AG04450 (cell line): ENCODE measurements at regions of chr1 and their contacts with region 1.

Region 1: DNA sequence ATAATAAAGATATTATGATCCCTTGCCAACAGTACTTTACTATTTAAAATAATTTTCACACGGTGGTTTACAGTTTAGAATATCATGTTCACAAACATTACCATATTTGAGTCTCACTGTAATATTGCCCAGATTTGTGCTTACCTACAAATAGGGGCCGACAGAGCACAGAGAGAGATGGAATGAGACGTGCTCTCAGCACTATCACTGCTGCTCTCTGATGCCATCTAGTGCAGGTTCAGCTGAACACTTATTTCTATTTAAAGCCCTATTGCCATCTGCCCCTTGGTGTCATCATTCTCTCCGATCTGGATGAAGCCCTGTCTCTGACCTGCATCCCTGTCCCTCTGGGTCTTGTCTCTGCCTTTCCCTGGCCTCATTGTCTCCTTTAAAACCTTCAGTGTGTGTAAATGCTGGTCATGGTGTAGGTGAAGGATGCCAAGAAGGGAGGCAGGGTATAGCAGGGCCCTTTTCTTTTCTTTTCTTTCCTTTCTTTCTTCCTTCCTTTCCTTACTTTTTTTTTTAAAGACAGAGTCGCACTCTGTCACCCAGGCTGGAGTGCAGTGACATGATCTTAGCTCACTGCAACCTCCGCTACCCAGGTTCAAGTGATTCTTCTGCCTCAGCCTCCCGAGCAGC is 6.9 kb upstream of the GPATCH4 start:
- DNase-seq: peak; percentile 39
- H3K4me3 ChIP-seq: no peak overlapping the region
- H3K27ac ChIP-seq: no peak overlapping the region
- H3K27me3 ChIP-seq: peaks cover 18% of the 10 kb centered on the region
- CTCF ChIP-seq: peak; percentile 91

Region 2: DNA sequence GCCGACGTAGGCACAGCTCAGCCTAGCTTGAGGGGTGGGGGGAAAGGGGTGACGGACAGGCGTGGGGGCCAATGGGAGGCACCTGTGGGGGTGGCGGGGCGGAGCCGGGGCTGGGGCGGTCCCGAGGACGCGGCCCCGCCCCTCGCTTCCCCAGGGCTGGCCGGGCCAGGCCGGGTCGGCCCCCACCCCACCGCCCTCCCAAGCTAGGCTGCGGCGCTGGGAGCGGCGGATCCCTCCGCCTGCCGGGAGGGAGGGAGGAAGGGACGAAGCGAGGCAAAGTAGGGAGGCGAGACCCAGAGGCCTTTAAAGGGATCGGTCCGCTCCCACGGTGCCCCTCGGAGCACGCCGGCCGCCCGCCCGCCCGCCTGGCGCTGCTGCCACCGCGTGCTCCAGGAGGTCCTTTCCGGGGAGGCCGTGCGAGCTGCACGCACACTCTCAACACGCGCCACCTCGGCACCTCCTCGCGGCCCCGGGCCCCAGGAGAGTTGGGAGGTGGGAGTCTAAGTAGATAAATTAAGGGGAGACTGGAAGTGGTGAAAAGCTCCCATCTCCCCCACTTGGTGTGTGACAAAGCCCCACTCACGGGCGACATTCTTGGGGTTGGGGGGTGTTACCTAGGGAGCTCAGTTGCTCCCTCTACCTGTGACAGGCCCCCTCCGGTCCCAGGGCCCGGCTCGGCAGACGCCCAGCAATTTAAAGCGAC is 107.2 kb before region 1 on chr1:
- CTCF ChIA-PET with region 1: no interaction called
- POLR2A ChIA-PET with region 1: no interaction called
- DNase-seq: peak; percentile 92
- H3K4me3 ChIP-seq: peak overlapping the region; percentile 94
- H3K27ac ChIP-seq: peak overlapping the region; percentile 100
- H3K27me3 ChIP-seq: no peaks in the 10 kb centered on the region
- CTCF ChIP-seq: peak; percentile 38

Region 3: DNA sequence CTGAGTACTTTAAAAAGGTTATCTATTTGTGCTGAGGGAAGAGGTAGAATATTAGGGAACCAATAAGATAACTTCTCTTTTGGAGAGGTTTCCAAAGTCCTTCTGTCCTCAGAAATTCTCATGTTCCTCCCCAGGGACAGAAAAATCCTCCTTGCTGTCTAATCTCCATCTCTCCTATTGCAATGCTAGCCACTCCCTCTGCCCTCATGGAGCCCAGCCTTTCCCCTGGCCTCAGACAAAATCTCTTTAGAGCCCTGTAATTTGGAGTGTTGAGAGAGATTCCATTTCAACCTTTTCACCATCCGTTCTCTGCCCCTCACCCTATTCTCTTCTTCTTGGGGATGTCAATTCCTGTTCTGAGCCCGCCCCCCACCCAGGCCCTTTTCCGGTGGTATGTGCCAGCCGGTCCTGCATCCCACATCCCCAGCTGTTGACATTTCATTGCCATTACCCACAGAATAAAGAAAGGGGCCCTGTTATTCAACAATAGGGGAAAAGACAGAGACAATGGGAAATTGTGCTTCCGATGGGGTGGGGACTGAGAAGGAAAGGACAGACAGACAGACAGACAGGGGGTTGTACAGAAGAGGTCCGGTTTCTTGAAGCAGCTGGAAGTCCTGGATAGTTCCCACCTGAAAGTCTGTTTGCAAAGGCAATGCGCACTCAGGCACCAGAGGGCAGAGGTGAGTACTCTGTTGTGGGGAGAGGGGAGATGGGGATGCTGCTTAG is 10.9 kb after region 1 on chr1 and contains the start of gene HAPLN2:
- CTCF ChIA-PET with region 1: interaction called, 10 read pairs
- POLR2A ChIA-PET with region 1: no interaction called
- DNase-seq: no peak
- H3K4me3 ChIP-seq: no peak within 1 kb of the TSS
- H3K27ac ChIP-seq: no peak within 1 kb of the TSS
- H3K27me3 ChIP-seq: peaks cover 55% of the 10 kb centered on the region
- CTCF ChIP-seq: peak; percentile 46
- polyA plus RNA-seq, gene HAPLN2: not detected in 2 replicates

Region 4: DNA sequence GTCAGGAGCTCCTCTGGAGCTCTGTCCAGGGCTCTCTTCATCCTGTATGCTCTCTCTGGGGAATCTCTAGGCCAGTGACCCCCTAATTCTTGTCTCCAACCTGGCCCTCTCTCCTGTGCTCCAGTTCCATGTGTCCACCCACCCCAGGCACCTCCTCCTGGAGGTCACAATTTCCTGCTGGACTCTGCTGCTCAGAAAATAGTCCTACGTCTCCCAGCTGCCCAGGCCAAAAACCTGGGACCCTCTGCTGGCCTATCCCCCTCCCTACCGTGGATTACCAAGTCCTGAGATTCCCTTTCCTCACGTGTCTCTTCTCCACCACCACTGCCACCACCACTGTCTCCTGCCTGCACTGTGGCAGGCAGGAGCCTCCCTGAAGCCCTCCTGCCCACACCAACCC is 57.4 kb after region 1 on chr1:
- CTCF ChIA-PET with region 1: no interaction called
- POLR2A ChIA-PET with region 1: no interaction called
- DNase-seq: no peak
- H3K4me3 ChIP-seq: no peak overlapping the region
- H3K27ac ChIP-seq: peak overlapping the region; percentile 2
- H3K27me3 ChIP-seq: no peaks in the 10 kb centered on the region
- CTCF ChIP-seq: no peak